ENCODE measurements at regions of chr1 and their contacts with region 1.

Region 1: DNA sequence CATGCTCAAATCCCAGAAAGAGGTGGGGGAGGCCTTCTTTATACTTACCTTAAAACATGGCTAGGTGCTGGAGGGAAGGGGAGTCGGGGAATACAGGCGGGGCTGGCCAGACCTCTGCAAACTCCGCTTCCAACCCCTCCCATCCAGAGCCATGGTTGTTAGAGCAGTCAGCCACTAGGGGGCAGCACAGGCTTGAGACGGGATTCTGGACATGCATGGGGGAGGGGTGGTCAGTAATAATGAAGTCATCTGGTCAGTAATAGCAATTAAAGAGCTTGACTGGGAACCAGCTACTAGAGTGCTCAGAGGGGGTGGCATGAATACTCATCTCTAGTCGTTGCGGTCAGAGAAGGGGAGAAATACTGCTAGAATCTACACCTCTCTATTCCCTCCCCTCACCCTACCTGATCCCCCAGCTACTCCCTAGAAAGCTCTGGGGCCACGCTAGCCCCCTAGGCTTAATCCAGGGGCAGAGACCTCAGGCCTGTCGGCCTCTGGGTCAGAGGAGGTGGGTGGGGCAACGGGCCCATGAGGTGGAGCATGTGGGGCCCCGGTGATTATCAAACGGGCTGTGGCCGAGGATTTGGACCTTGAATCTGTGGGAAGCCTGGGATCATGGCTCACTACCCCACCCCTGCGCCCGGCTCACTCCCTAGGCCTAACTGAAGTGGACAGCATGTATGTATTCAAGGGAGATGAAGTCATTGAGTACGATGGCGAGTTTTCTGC is 2.9 kb downstream of the CASQ1 start:
- DNase-seq: peak; percentile 68
- ATAC-seq: peak; percentile 94
- H3K4me3 ChIP-seq: no peak overlapping the region
- H3K27ac ChIP-seq: no peak overlapping the region
- H3K4me1 ChIP-seq: peaks cover 3 to 4% of the 10 kb centered on the region in 2 experiments; a peak in 2 of 4 replicates
- H3K27me3 ChIP-seq: no peaks in the 10 kb centered on the region
- CTCF ChIP-seq: peak; percentile 92 to 97 (median 96)
- POLR2A ChIP-seq: no peak
- RAD21 ChIP-seq: peak; percentile 96

Region 2: DNA sequence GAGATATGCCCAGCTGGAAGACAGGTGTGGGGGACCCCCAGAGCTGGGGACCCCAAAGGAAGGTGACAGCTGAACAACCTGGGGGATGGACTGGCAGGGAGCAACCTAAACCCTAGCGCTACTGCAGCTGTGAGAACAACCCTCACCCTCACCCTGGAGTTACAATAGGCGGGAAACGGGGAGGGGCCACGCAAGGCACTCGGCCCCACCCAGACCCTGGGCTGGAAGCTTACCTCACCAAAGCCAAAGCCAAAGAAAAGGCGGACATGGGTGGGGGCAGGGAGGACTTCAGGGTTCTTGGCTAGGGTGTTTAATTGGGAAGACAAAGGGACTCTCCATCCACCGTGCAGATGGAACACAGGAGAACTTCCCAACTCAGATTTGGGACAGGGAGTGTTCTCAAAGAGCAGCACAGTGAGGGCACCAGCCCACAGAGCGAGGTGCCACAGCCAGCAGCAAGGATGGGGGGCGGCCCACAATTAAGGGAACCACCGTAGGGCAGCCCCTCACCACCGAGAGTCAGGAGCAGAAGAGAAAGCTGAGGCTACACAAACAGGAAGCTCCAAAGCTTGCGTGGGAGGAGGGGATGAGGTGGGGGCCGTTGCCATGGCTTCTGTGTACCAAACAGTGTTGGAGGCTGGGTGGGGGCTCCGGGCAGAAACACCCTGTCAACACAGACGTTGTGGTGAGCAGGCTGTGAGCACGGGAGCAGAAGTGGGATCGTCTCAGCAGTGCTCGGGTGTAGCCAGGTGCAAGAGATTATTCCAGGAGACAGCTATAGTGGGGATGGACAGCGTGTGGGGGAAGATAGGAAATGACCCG is 269.8 kb before region 1 on chr1:
- CTCF ChIA-PET with region 1: no interaction called
- POLR2A ChIA-PET with region 1: no interaction called
- RAD21 ChIA-PET with region 1: no interaction called
- intact Hi-C with region 1: no loop called
- DNase-seq: no peak
- ATAC-seq: no peak
- H3K4me3 ChIP-seq: peak overlapping the region; percentile 57 to 62
- H3K27ac ChIP-seq: no peak overlapping the region; the same call in 1 of the 2 replicates
- H3K4me1 ChIP-seq: peaks cover 21 to 42% of the 10 kb centered on the region in 2 experiments
- H3K27me3 ChIP-seq: no peaks in the 10 kb centered on the region
- CTCF ChIP-seq: no peak
- POLR2A ChIP-seq: no peak
- RAD21 ChIP-seq: no peak

Region 3: DNA sequence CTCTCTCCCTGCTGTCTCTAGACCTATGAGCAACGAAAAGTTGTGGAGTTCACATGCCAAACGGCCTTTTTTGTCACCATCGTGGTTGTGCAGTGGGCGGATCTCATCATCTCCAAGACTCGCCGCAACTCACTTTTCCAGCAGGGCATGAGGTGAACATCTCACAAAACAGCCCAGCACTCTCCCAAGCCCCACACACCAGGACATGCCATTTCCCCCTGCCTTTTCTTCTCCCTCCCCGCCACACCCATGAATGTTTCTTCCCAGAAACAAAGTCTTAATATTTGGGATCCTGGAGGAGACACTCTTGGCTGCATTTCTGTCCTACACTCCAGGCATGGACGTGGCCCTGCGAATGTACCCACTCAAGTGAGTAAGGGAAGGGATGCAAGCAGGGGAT is 11.6 kb before region 1 on chr1:
- CTCF ChIA-PET with region 1: interaction called, 10 read pairs
- POLR2A ChIA-PET with region 1: no interaction called
- RAD21 ChIA-PET with region 1: no interaction called
- intact Hi-C with region 1: no loop called
- DNase-seq: no peak
- ATAC-seq: no peak
- H3K4me3 ChIP-seq: no peak overlapping the region
- H3K27ac ChIP-seq: no peak overlapping the region
- H3K4me1 ChIP-seq: no peaks in the 10 kb centered on the region
- H3K27me3 ChIP-seq: no peaks in the 10 kb centered on the region; the same call in 1 of the 2 replicates
- CTCF ChIP-seq: no peak
- POLR2A ChIP-seq: no peak
- RAD21 ChIP-seq: no peak

Region 4: DNA sequence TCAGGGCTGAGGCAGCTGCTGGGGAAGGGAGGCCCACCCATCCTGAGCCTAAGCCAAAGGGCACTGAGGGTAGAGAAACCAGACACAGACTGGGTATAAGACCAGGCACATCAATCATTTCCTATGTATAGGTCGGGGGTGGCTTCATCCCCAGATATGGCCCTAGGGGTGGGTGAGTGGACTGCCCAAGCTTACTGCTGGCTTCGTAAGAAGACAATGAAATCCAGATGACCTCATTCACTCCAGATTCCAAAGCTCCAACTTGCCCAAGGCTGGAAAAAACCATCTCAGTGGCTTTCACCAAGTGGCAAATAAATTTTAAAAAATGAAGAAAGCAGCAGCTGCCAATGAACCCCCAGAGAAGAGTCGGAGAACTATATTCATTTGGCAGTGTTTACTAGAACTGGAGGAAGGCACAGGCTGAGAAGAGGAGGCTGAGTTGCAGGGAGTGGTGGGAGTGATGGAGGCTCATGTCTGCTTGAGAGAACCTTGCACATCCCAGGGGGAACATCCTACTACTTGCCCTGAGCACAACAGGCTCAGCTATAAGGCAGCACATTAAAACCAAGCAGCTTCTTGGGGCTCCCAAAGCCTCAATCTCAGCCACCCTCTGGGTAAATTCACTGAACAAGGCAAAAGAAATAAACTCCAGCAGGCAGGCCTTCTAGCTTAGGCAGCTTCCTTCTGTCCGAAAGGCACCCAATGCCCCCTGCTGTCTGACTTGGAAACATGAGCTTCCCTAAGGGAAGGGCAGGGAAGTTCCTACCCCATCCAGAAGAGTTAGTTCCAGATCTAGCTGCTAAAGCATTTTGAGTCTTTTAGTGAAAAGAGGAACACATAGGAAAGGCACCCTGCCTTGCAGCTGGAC is 26.0 kb after region 1 on chr1:
- CTCF ChIA-PET with region 1: interaction called, 34 read pairs
- POLR2A ChIA-PET with region 1: no interaction called
- RAD21 ChIA-PET with region 1: interaction called, 5 to 6 read pairs
- intact Hi-C with region 1: loop called (anchors 1 kb)
- DNase-seq: peak; percentile 19
- ATAC-seq: peak; percentile 78
- H3K4me3 ChIP-seq: no peak overlapping the region
- H3K27ac ChIP-seq: no peak overlapping the region
- H3K4me1 ChIP-seq: no peaks in the 10 kb centered on the region
- H3K27me3 ChIP-seq: no peaks in the 10 kb centered on the region
- CTCF ChIP-seq: peak; percentile 36 to 41 (median 40); a peak in 4 of 6 replicates
- POLR2A ChIP-seq: no peak
- RAD21 ChIP-seq: peak; percentile 60

Region 5: GRCh38 chr1:160251687-160252526 is 58.7 kb after region 1 on chr1:
- CTCF ChIA-PET with region 1: interaction called, 39 read pairs
- POLR2A ChIA-PET with region 1: interaction called, 4 read pairs
- RAD21 ChIA-PET with region 1: interaction called, 7 read pairs
- intact Hi-C with region 1: loop called (anchors 1 kb)
- DNase-seq: peak; percentile 38
- ATAC-seq: peak; percentile 96
- H3K4me3 ChIP-seq: no peak overlapping the region
- H3K27ac ChIP-seq: no peak overlapping the region
- H3K4me1 ChIP-seq: peaks cover 5 to 11% of the 10 kb centered on the region in 2 experiments; a peak in 3 of 4 replicates
- H3K27me3 ChIP-seq: no peaks in the 10 kb centered on the region
- CTCF ChIP-seq: peak; percentile 69 to 83 (median 71); a peak in 5 of 6 replicates
- POLR2A ChIP-seq: no peak
- RAD21 ChIP-seq: peak; percentile 81

Region 6: DNA sequence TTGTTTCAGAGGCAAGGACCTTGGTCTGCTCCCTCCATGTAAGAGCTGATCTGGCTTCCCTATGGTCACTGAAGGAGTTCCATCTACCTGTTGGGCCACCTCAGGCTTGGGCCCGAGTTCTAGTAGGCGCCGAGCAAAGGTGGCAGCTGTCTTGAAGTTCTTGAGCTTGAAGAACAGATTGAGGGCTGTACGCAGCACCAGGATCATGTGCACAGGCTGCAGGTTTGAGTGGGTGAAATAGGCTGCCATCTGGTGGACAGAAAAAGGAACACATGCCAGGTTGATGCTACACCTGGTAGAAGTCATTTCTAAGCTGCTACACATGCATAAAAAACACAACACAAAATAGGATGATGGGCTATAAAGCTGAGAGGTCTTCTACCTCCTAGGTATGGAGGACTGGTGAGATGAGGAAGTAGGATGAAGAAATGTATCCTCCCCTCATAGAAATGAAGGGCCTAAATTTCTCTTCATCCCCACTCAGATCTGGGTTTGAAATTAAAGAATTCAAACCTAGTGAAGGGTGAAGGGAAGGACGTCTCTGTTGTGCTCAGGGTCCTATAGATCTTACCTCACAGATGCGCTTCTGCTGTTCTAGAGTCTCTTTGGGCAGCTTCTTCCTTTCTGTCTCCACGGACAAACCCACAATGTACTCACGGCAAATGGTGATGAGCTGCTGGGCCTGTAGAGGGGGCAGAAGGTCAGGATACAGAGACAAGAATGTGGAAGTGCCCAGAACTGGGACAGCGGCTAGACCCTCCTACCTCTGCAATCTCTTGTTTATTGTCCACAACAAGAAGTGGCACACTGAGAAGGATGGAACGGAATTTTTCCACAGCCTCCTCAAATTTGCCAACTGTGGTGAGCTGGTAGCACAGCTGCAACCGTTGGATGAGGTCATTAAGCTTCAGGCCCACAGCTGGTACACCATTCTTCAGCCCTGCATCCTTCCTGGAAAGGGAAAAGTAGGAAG is 98.3 kb after region 1 on chr1:
- CTCF ChIA-PET with region 1: interaction called, 31 read pairs
- POLR2A ChIA-PET with region 1: no interaction called
- RAD21 ChIA-PET with region 1: interaction called, 7 to 8 read pairs
- intact Hi-C with region 1: loop called (anchors 1 kb)
- DNase-seq: peak; percentile 37
- ATAC-seq: peak; percentile 95
- H3K4me3 ChIP-seq: no peak overlapping the region
- H3K27ac ChIP-seq: no peak overlapping the region
- H3K4me1 ChIP-seq: no peaks in the 10 kb centered on the region
- H3K27me3 ChIP-seq: no peaks in the 10 kb centered on the region
- CTCF ChIP-seq: peak; percentile 65 to 84 (median 84)
- POLR2A ChIP-seq: no peak
- RAD21 ChIP-seq: peak; percentile 62

Region 7: DNA sequence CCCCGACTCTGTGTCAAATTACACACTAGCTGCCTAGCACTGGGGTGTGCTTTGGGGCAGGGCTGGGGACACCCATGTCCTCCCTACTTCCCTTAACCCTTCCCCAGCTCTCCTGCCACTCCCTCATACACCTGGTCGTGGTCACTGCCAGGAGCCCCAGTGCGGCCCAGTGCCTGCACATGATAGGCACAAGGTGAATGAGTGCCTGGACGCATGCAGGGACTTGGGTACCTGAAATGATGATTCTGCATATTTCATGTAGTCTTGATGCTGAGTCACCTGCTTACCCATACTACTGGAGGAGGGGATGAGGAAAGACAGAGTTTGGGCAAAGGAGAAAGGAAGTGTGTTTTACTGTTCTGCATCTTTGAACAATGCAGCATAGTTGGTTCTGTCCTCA is 205.6 kb after region 1 on chr1:
- CTCF ChIA-PET with region 1: no interaction called
- POLR2A ChIA-PET with region 1: no interaction called
- RAD21 ChIA-PET with region 1: no interaction called
- intact Hi-C with region 1: no loop called
- DNase-seq: no peak
- ATAC-seq: 0 out of 2 replicates have a peak, but pooled peaks have one; percentile 22
- H3K4me3 ChIP-seq: no peak overlapping the region
- H3K27ac ChIP-seq: no peak overlapping the region
- H3K4me1 ChIP-seq: peaks cover 0 to 6% of the 10 kb centered on the region in 2 experiments; a peak in 1 of 4 replicates
- H3K27me3 ChIP-seq: no peaks in the 10 kb centered on the region
- CTCF ChIP-seq: no peak
- POLR2A ChIP-seq: no peak
- RAD21 ChIP-seq: no peak

Region 8: GRCh38 chr1:160416369-160416768 is 223.1 kb after region 1 on chr1:
- CTCF ChIA-PET with region 1: interaction called, 9 read pairs
- POLR2A ChIA-PET with region 1: no interaction called
- RAD21 ChIA-PET with region 1: no interaction called
- intact Hi-C with region 1: loop called (anchors 1 kb)
- DNase-seq: peak; percentile 36
- ATAC-seq: peak; percentile 98
- H3K4me3 ChIP-seq: no peak overlapping the region
- H3K27ac ChIP-seq: no peak overlapping the region
- H3K4me1 ChIP-seq: no peaks in the 10 kb centered on the region
- H3K27me3 ChIP-seq: no peaks in the 10 kb centered on the region
- CTCF ChIP-seq: peak; percentile 64 to 85 (median 75)
- POLR2A ChIP-seq: no peak
- RAD21 ChIP-seq: peak; percentile 94

Measured in HCT116 (cell line).